Right ventricle myocardium superior (tissue), 1 donor: ENCODE measurements at regions of chr20 and their contacts with region 1.

Region 1: GRCh38 chr20:46349035-46349741 is 40.9 kb upstream of the CDH22 start:
- DNase-seq: peak; percentile 79
- ATAC-seq: peak; percentile 89

Region 2: DNA sequence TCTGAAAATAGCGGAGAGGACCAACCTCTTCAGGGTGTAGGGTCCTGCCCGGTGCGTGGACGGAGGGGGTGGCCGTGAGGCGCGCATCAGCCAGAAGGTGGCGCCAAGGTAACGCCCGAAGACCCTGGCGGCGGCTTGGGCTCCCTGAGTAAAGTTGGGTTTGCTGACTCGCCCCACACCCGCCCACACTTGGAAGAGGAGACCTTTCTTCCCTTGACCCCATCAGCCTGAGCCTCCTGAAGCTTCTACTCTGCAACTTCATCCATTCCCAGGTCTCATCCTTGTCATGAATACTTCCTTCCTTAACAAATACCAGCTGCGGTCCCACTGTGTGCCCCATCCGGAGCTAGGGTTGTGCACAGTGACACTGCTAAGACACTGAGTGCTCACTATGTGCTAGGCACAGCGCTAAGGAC is 216.5 kb before region 1 on chr20:
- intact Hi-C with region 1: loop called (anchors 5 kb)
- DNase-seq: peak; percentile 83
- ATAC-seq: peak; percentile 90

Region 3: GRCh38 chr20:46375771-46376170 is 26.6 kb after region 1 on chr20:
- intact Hi-C with region 1: no loop called
- DNase-seq: no peak
- ATAC-seq: no peak